H1 (cell line): ENCODE measurements at regions of chr1 and their contacts with region 1.

Region 1: DNA sequence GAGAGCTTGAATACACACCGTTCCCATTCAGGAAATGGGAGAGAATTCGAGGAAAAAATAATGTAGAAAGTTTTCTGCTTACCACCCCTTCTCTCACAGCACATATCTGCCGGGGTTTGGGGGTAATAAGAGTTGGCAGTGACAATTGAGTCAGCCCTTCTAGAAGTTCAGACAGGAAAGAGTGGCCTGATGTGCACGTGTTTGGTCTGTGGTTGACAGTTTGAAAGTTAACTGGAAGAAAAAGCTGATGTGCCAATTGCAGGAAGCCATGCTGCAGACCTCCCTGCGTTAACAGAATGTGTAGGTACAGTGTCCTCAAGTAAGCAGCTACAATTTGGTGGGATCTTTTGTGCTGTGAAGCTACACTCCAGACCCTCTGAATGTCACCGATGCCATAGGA is 50.9 kb downstream of the DHX9 start:
- DNase-seq: no peak
- H3K4me3 ChIP-seq: no peak overlapping the region
- H3K27ac ChIP-seq: no peak overlapping the region
- H3K4me1 ChIP-seq: no peaks in the 10 kb centered on the region
- H3K27me3 ChIP-seq: no peaks in the 10 kb centered on the region
- CTCF ChIP-seq: no peak
- EP300 ChIP-seq: no peak
- POLR2A ChIP-seq: no peak
- RAD21 ChIP-seq: no peak

Region 2: DNA sequence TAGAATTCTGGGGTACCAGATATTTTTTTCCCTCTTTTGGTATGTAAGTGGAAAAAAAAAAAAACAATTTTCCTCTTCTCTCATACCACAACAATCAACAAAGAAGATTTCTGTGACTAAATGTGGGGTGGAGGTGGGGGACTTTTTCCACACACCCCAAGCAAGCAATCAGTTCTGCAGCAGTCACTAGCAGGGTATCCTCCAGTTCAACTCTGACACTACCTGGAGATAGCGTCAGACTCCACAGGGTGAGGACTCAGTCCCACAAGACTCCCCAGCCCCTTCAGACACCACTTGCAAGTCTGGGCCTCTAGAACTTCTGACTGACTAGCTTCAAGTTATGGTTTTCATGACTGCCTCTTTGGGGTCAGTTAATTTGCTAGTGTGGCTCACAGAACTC is 44.6 kb before region 1 on chr1:
- CTCF ChIA-PET with region 1: interaction called, 3 read pairs
- POLR2A ChIA-PET with region 1: interaction called, 34 read pairs
- DNase-seq: no peak
- H3K4me3 ChIP-seq: 0 out of 8 replicates have a peak overlapping the region, but pooled peaks of 1 of the 4 experiments have one; percentile 9
- H3K27ac ChIP-seq: no peak overlapping the region
- H3K4me1 ChIP-seq: peaks cover 0 to 15% (median 6%) of the 10 kb centered on the region in 4 experiments; a peak in 4 of 7 replicates
- H3K27me3 ChIP-seq: no peaks in the 10 kb centered on the region
- CTCF ChIP-seq: no peak
- EP300 ChIP-seq: no peak
- POLR2A ChIP-seq: no peak
- RAD21 ChIP-seq: no peak

Region 3: GRCh38 chr1:182869241-182869666 is 20.7 kb before region 1 on chr1:
- CTCF ChIA-PET with region 1: no interaction called
- POLR2A ChIA-PET with region 1: interaction called, 34 read pairs
- DNase-seq: peak in 1 of 2 experiments; percentile 85
- H3K4me3 ChIP-seq: no peak overlapping the region
- H3K27ac ChIP-seq: peak overlapping the region; percentile 61
- H3K4me1 ChIP-seq: no peaks in the 10 kb centered on the region
- H3K27me3 ChIP-seq: no peaks in the 10 kb centered on the region
- CTCF ChIP-seq: no peak
- EP300 ChIP-seq: peak in 1 of 2 experiments; percentile 94; a peak in 2 of 3 replicates
- POLR2A ChIP-seq: 0 out of 3 replicates have a peak, but pooled peaks of 1 of the 2 experiments have one; percentile 31
- RAD21 ChIP-seq: no peak

Region 4: GRCh38 chr1:182905316-182905715 is 15.3 kb after region 1 on chr1:
- CTCF ChIA-PET with region 1: interaction called, 3 read pairs
- POLR2A ChIA-PET with region 1: interaction called, 52 read pairs
- DNase-seq: no peak
- H3K4me3 ChIP-seq: no peak overlapping the region
- H3K27ac ChIP-seq: no peak overlapping the region
- H3K4me1 ChIP-seq: 0 out of 7 replicates have a peak, but pooled peaks cover 0 to 2% (median under 1%) of the 10 kb centered on the region in 4 experiments
- H3K27me3 ChIP-seq: no peaks in the 10 kb centered on the region
- CTCF ChIP-seq: no peak
- EP300 ChIP-seq: no peak
- POLR2A ChIP-seq: no peak
- RAD21 ChIP-seq: no peak